ENCODE measurements at regions of chr9 and their contacts with region 1.

Region 1: GRCh38 chr9:130172161-130172857 is at the start of gene NCS1:
- DNase-seq: peak; percentile 41 to 60
- ATAC-seq: peak; percentile 61 to 74 (median 68)
- H3K4me3 ChIP-seq: peak within 1 kb of the TSS; percentile 23
- H3K4me3 Mint-ChIP-seq: peak within 1 kb of the TSS; percentile 83
- H3K27ac ChIP-seq: no peak within 1 kb of the TSS
- H3K27ac Mint-ChIP-seq: peak within 1 kb of the TSS in 1 of 2 donors; percentile 72
- H3K4me1 ChIP-seq: peaks cover 15% of the 10 kb centered on the region
- H3K4me1 Mint-ChIP-seq: peaks cover 1 to 15% of the 10 kb centered on the region in 2 donors
- H3K27me3 ChIP-seq: peaks cover 10% of the 10 kb centered on the region
- H3K27me3 Mint-ChIP-seq: no peaks in the 10 kb centered on the region
- CTCF ChIP-seq: no peak
- total RNA-seq, gene NCS1: 1.4 to 2.4 (median 1.5) TPM

Region 2: DNA sequence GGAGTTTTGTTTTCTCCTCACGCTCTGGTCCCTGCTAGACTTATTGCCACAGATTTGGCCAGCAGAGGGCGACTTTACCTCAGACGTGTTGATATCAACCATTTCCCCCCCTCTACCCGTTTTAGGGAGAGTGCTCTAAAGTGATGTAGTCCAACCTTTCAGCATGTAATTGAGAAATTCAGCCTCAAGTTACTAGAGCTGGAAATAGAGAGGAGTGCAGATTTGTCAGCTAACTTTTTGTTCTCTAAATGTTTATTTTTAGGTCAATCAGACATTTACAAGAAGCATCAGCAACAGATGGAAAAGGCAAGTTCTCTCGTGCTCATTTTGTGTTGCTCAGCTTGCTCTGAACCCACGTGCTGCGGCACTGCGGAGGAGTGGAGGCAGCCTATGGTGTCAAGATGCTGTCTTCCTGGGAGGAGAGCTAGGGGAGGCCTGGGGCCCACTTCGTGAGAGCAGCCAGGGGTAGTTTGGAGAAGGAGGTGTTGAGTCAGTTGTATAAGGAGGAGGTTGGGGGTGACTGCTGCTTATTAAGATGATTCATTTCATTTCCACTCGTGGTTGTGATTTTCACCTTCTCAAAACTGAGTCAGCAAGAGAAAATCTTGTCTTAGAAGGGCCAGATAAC is 65.0 kb before region 1 on chr9:
- intact Hi-C with region 1: loop called (anchors 2 kb)
- DNase-seq: peak; percentile 80 to 94
- ATAC-seq: peak; percentile 76 to 87 (median 82)
- H3K4me3 ChIP-seq: no peak overlapping the region
- H3K4me3 Mint-ChIP-seq: peak overlapping the region; percentile 73
- H3K27ac ChIP-seq: no peak overlapping the region
- H3K27ac Mint-ChIP-seq: peak overlapping the region; percentile 85 to 89
- H3K4me1 ChIP-seq: peaks cover 23% of the 10 kb centered on the region
- H3K4me1 Mint-ChIP-seq: peaks cover 27 to 42% of the 10 kb centered on the region in 2 donors
- H3K27me3 ChIP-seq: no peaks in the 10 kb centered on the region
- H3K27me3 Mint-ChIP-seq: no peaks in the 10 kb centered on the region
- CTCF ChIP-seq: peak; percentile 90

Region 3: DNA sequence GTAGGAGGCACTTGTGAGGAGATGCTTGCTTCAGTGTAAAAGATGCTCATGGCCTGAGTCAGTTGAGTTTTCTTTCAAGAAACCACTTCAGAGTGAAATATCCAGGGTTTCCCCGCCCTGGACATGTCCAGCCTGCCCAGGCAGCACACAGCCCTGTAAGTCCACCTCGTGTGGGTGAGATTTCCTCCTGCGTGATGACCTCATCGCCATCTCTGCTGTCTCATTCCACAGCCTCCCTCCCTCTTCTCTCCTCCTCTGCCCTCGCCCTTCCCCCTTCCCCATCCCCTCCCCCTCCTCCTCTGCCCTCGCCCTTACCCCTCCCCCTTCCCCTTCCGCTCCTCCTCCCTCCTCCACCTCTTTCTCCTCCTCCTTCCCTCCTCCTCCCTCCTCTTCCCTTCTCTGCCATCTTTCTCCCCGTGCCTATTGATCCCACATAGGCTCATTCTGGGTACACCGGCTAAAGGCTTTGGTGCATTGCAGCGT is 34.1 kb before region 1 on chr9:
- intact Hi-C with region 1: no loop called
- DNase-seq: no peak
- ATAC-seq: peak; percentile 33 to 48 (median 47)
- H3K4me3 ChIP-seq: no peak overlapping the region
- H3K4me3 Mint-ChIP-seq: no peak overlapping the region
- H3K27ac ChIP-seq: no peak overlapping the region
- H3K27ac Mint-ChIP-seq: peak overlapping the region; percentile 23 to 63
- H3K4me1 ChIP-seq: peaks cover 26% of the 10 kb centered on the region
- H3K4me1 Mint-ChIP-seq: peaks cover 45 to 50% of the 10 kb centered on the region in 2 donors
- H3K27me3 ChIP-seq: no peaks in the 10 kb centered on the region
- H3K27me3 Mint-ChIP-seq: no peaks in the 10 kb centered on the region
- CTCF ChIP-seq: no peak

Region 4: DNA sequence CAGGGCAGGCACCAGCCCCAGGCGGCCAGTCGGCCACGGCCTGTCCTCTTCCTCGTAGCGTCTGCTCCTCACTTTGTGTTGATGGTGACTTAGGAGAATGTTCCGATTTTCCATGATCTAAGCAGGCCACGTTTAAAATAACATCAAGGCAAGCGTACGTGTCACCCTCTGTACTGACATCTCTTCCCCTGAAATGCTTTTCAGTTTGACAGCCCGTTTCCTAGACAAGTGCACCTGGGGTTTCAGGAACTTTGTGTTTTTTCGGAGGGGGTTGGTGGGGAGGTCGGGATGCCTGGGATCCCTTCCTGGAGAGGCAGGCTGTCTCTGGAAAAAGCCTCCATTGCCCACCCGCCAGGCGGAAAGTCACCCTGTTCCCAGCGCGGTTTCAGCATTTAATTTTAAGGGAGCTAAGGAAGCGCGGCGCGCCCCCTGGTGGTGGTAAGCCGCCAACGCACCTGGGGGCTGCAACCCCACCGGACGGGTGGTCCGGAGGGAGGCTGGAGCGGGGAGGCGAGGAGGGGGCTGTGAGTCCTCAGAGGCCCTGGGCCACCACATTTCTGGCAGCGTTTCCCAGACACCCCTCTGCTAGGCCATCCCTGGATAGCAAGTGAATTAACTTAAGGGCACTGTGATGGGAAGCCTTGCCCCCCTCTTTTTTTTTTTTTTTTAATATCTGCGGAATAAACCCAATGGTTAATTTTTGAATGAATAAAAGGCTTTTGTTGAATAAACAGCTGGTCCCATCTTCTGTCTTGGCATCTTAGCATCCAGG is 63.8 kb after region 1 on chr9:
- intact Hi-C with region 1: loop called (anchors 10 kb)
- DNase-seq: peak; percentile 73 to 82
- ATAC-seq: peak; percentile 66 to 82 (median 73)
- H3K4me3 ChIP-seq: no peak overlapping the region
- H3K4me3 Mint-ChIP-seq: no peak overlapping the region
- H3K27ac ChIP-seq: no peak overlapping the region
- H3K27ac Mint-ChIP-seq: peak overlapping the region in 1 of 2 donors; percentile 43
- H3K4me1 ChIP-seq: peaks cover 18% of the 10 kb centered on the region
- H3K4me1 Mint-ChIP-seq: peaks cover 9 to 11% of the 10 kb centered on the region in 2 donors
- H3K27me3 ChIP-seq: no peaks in the 10 kb centered on the region
- H3K27me3 Mint-ChIP-seq: no peaks in the 10 kb centered on the region
- CTCF ChIP-seq: peak; percentile 97

Region 5: DNA sequence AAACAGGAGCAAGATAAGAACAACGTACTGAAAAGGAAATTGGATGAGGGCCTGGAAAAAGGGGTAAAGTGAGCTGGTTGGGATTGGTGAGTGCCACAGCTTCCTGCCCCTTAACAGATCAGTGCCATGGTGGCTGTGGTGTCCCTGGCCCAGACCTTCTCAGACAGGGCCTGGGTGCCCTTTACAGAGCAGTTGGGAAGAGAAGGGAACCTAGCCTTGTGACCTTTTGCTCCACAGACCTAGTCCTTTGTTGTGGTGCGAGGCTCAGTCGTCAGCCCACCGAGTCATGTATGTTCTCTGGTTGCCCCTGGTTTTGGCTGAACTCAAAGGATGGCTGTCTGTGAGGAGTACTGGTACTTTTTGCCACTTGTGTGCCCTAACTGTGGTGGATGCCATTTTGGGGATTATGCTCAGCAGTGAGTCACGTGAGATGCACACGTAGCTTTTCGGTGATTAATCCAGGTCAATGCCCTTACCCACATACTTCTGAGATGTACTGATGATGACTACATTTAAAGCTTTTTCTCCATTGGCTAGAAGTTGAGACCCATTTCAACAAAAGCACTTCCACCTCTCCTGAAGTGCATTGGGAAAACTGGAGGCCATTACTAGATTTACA is 569.6 kb after region 1 on chr9:
- intact Hi-C with region 1: no loop called
- DNase-seq: no peak
- ATAC-seq: no peak
- H3K4me3 ChIP-seq: no peak overlapping the region
- H3K4me3 Mint-ChIP-seq: no peak overlapping the region
- H3K27ac ChIP-seq: no peak overlapping the region
- H3K27ac Mint-ChIP-seq: no peak overlapping the region
- H3K4me1 ChIP-seq: no peaks in the 10 kb centered on the region
- H3K4me1 Mint-ChIP-seq: peaks cover 8 to 16% of the 10 kb centered on the region in 2 donors
- H3K27me3 ChIP-seq: no peaks in the 10 kb centered on the region
- H3K27me3 Mint-ChIP-seq: no peaks in the 10 kb centered on the region
- CTCF ChIP-seq: no peak

Measured in natural killer cell (primary cell).